PC-9 (cell line): ENCODE measurements at regions of chr5 and their contacts with region 1.

Region 1: DNA sequence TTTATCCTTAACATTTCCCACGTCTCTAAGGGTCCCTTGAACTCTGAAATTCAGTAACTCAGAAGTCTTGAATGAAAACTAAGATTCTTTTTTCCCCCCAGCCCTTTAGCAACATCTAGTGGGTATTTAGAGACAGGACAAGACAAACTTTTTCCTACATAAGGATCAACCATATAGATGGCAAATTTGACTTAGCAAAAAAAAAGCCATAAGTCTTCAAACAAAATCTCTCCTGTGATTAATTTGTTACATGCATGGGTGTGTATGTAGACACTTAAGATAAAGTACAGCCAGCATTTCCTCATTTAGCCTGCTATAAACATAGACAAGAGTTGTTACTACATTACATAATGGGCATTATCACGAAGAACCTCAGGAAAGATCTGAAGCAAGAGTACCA is 29.1 kb upstream of the ANKRD31 start:
- DNase-seq: peak in 1 of 2 experiments; percentile 48
- H3K4me3 ChIP-seq: no peak overlapping the region
- H3K27ac ChIP-seq: no peak overlapping the region
- H3K4me1 ChIP-seq: no peaks in the 10 kb centered on the region
- H3K27me3 ChIP-seq: no peaks in the 10 kb centered on the region
- CTCF ChIP-seq: peak; percentile 78

Region 2: GRCh38 chr5:73902327-73903051 is 1363.2 kb before region 1 on chr5:
- CTCF ChIA-PET with region 1: no interaction called
- POLR2A ChIA-PET with region 1: no interaction called
- intact Hi-C with region 1: loop called (anchors 10 kb)
- DNase-seq: no peak
- H3K4me3 ChIP-seq: no peak overlapping the region
- H3K27ac ChIP-seq: peak overlapping the region; percentile 89
- H3K4me1 ChIP-seq: peaks cover 44% of the 10 kb centered on the region
- H3K27me3 ChIP-seq: no peaks in the 10 kb centered on the region
- CTCF ChIP-seq: peak; percentile 92

Region 3: GRCh38 chr5:74673011-74673790 is 592.5 kb before region 1 on chr5:
- CTCF ChIA-PET with region 1: no interaction called
- POLR2A ChIA-PET with region 1: no interaction called
- intact Hi-C with region 1: loop called (anchors 1 kb)
- DNase-seq: peak; percentile 29 to 66
- H3K4me3 ChIP-seq: no peak overlapping the region
- H3K27ac ChIP-seq: no peak overlapping the region
- H3K4me1 ChIP-seq: peaks cover 9% of the 10 kb centered on the region; the same call in 1 of the 2 replicates
- H3K27me3 ChIP-seq: no peaks in the 10 kb centered on the region
- CTCF ChIP-seq: peak; percentile 63

Region 4: GRCh38 chr5:74766849-74767578 is 498.7 kb before region 1 on chr5 and contains the starts of genes GFM2 and NSA2:
- CTCF ChIA-PET with region 1: no interaction called
- POLR2A ChIA-PET with region 1: no interaction called
- intact Hi-C with region 1: loop called (anchors 10 kb)
- DNase-seq: peak; percentile 83 to 88
- H3K4me3 ChIP-seq: peak within 1 kb of the TSS; percentile 83
- H3K27ac ChIP-seq: peak within 1 kb of the TSS; percentile 58
- H3K4me1 ChIP-seq: peaks cover 44% of the 10 kb centered on the region
- H3K27me3 ChIP-seq: no peaks in the 10 kb centered on the region
- CTCF ChIP-seq: no peak; the same call in 1 of the 2 replicates
- total RNA-seq, gene GFM2: 38.5 and 39.8 TPM in 2 replicates
- total RNA-seq, gene NSA2: 47.3 and 87.1 TPM in 2 replicates

Region 5: DNA sequence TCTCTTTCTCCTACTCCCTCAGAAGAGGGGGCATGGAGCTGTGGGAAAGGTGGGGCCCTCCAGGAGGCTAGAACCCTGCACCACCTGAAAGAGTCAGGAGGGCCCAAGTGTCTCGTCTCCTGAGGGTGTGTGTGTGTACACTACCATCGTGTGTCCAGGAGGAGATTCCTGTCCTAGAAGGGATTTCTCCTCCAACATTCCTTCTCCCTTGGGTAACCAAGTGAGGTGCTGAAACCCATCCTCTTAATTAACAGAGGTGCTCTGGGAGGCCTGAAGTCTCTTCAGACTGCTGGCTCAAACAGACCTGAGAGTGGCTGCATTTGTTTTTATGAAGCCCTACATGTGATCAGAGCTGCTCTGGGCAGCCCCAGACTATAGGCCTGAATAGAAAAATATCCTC is 338.4 kb before region 1 on chr5:
- CTCF ChIA-PET with region 1: interaction called, 4 read pairs
- POLR2A ChIA-PET with region 1: no interaction called
- intact Hi-C with region 1: loop called (anchors 1 kb)
- DNase-seq: no peak
- H3K4me3 ChIP-seq: no peak overlapping the region
- H3K27ac ChIP-seq: no peak overlapping the region
- H3K4me1 ChIP-seq: no peaks in the 10 kb centered on the region
- H3K27me3 ChIP-seq: no peaks in the 10 kb centered on the region
- CTCF ChIP-seq: no peak

Region 6: DNA sequence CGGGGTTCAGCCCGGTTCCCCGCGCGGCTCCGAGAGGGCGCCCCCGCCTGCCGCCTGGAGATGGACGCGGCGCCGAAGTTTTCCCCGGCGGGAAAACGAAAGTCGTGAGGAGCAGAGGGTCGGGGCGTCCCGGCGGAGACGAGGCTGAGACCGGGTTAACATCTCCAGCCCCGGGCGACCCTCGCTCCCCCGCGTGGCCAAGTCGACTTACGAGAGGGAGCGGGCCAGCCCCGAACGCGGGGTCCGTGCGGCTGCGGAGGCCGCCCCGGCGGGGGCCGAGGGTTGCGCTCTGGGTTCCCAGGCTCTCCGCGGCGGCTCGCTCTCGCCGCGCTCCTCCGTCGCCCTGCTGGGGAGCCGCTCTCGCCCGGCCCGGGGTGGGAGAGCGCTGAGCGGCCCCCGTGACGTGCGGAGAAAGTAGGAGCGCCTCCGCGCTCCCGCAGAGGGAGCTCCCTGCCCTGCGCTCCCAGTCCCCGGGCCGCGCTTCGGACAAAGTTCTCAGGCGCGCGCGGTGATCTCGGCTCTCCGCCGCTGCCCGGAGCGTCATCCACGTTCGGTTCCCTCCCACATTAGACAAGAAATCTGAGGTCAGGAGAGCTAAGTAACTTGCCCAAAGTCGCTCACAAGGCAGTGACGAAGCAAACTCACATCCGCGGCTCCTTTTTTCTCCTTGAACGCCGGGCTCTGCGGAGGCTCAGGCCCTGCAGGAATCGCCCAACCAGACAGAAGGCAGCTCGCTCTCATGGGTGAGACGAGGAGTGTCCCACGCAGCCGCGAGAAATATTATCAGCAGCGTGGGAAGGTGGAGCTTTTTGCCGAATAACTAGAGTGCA is 212.2 kb before region 1 on chr5:
- CTCF ChIA-PET with region 1: no interaction called
- POLR2A ChIA-PET with region 1: no interaction called
- intact Hi-C with region 1: loop called (anchors 1 kb)
- DNase-seq: peak; percentile 60 to 66
- H3K4me3 ChIP-seq: peak overlapping the region; percentile 72
- H3K27ac ChIP-seq: 0 out of 2 replicates have a peak overlapping the region, but pooled peaks have one; percentile 9
- H3K4me1 ChIP-seq: peaks cover 20% of the 10 kb centered on the region
- H3K27me3 ChIP-seq: no peaks in the 10 kb centered on the region
- CTCF ChIP-seq: peak; percentile 27; the same call in 1 of the 2 replicates

Region 7: GRCh38 chr5:75236322-75237316 is 29.1 kb before region 1 on chr5 and contains the start of gene ANKRD31:
- CTCF ChIA-PET with region 1: no interaction called
- POLR2A ChIA-PET with region 1: no interaction called
- intact Hi-C with region 1: loop called (anchors 1 kb)
- DNase-seq: peak; percentile 52 to 84
- H3K4me3 ChIP-seq: peak within 1 kb of the TSS; percentile 94
- H3K27ac ChIP-seq: peak within 1 kb of the TSS; percentile 43
- H3K4me1 ChIP-seq: peaks cover 33% of the 10 kb centered on the region
- H3K27me3 ChIP-seq: no peaks in the 10 kb centered on the region
- CTCF ChIP-seq: no peak; the same call in none of the 2 replicates
- total RNA-seq, gene ANKRD31: 0.23 and 0.48 TPM in 2 replicates

Region 8: GRCh38 chr5:75433814-75434506 is 168.2 kb after region 1 on chr5:
- CTCF ChIA-PET with region 1: no interaction called
- POLR2A ChIA-PET with region 1: no interaction called
- intact Hi-C with region 1: no loop called
- DNase-seq: no peak
- H3K4me3 ChIP-seq: no peak overlapping the region
- H3K27ac ChIP-seq: no peak overlapping the region
- H3K4me1 ChIP-seq: no peaks in the 10 kb centered on the region
- H3K27me3 ChIP-seq: no peaks in the 10 kb centered on the region
- CTCF ChIP-seq: no peak